ENCODE measurements at regions of chr3 and their contacts with region 1.

Region 1: GRCh38 chr3:71130471-71131374 is 452.8 kb downstream of the FOXP1 start:
- DNase-seq: peak; percentile 52 to 90 (median 77)
- ATAC-seq: peak; percentile 74
- H3K4me3 ChIP-seq: peak overlapping the region; percentile 56 to 57
- H3K4me3 Mint-ChIP-seq: peak overlapping the region; percentile 87
- H3K27ac ChIP-seq: peak overlapping the region; percentile 82 to 88
- H3K27ac Mint-ChIP-seq: peak overlapping the region; percentile 93
- H3K4me1 ChIP-seq: peaks cover 57% of the 10 kb centered on the region
- H3K4me1 Mint-ChIP-seq: peaks cover 80% of the 10 kb centered on the region
- H3K27me3 ChIP-seq: no peaks in the 10 kb centered on the region
- H3K27me3 Mint-ChIP-seq: no peaks in the 10 kb centered on the region
- CTCF ChIP-seq: no peak

Region 2: GRCh38 chr3:71064288-71064955 is 66.3 kb before region 1 on chr3:
- CTCF ChIA-PET with region 1: interaction called, 3 read pairs
- POLR2A ChIA-PET with region 1: interaction called, 4 read pairs
- intact Hi-C with region 1: loop called (anchors 1 to 2 kb)
- DNase-seq: peak; percentile 48 to 86 (median 66)
- ATAC-seq: peak; percentile 43
- H3K4me3 ChIP-seq: peak overlapping the region; percentile 65 to 91
- H3K4me3 Mint-ChIP-seq: no peak overlapping the region
- H3K27ac ChIP-seq: peak overlapping the region; percentile 80 to 85
- H3K27ac Mint-ChIP-seq: no peak overlapping the region
- H3K4me1 ChIP-seq: peaks cover 79% of the 10 kb centered on the region
- H3K4me1 Mint-ChIP-seq: peaks cover 67% of the 10 kb centered on the region
- H3K27me3 ChIP-seq: no peaks in the 10 kb centered on the region
- H3K27me3 Mint-ChIP-seq: no peaks in the 10 kb centered on the region
- CTCF ChIP-seq: no peak

Region 3: DNA sequence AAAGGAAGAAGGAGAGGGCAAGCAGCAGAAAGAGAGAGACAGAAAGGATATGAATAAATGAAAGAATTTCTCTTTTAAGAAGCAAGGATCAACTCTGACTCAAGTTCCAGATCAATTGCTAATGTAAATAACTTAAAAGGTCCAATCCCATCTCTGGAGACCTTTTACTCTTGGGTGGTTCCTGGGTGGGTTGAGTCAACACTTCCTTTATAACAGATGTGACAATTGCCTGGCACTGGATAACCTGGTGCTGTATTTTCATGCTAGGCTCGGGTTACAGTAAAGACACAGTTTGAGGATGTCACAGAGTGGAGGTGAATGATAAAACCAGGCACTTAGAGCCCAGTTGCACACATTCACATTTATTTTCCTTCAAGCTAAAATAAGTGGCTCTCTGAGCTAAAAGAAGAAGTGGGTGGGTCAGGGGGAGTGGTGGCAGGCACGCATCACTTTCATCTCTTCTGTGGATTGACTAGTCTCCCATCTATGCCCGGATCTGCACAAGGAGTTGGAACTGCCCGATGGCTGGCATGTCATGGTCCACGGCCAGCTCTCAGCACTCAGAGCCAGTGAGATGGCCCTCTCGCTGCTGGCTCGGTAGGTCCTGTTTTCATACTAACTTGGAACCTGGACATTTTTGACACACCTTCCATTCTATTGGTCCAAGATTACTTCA is 13.0 kb before region 1 on chr3:
- CTCF ChIA-PET with region 1: interaction called, 3 read pairs
- POLR2A ChIA-PET with region 1: interaction called, 3 read pairs
- intact Hi-C with region 1: loop called in 1 of 2 experiments (anchors 2 kb)
- DNase-seq: no peak
- ATAC-seq: peak; percentile 36
- H3K4me3 ChIP-seq: no peak overlapping the region
- H3K4me3 Mint-ChIP-seq: no peak overlapping the region
- H3K27ac ChIP-seq: no peak overlapping the region
- H3K27ac Mint-ChIP-seq: peak overlapping the region; percentile 86
- H3K4me1 ChIP-seq: peaks cover 56% of the 10 kb centered on the region
- H3K4me1 Mint-ChIP-seq: peaks cover 86% of the 10 kb centered on the region
- H3K27me3 ChIP-seq: no peaks in the 10 kb centered on the region
- H3K27me3 Mint-ChIP-seq: no peaks in the 10 kb centered on the region
- CTCF ChIP-seq: no peak

Region 4: GRCh38 chr3:71176366-71176765 is 45.6 kb after region 1 on chr3:
- CTCF ChIA-PET with region 1: no interaction called
- POLR2A ChIA-PET with region 1: interaction called, 3 read pairs
- intact Hi-C with region 1: loop called in 1 of 2 experiments (anchors 5 kb)
- DNase-seq: no peak
- ATAC-seq: no peak
- H3K4me3 ChIP-seq: no peak overlapping the region
- H3K4me3 Mint-ChIP-seq: no peak overlapping the region
- H3K27ac ChIP-seq: no peak overlapping the region
- H3K27ac Mint-ChIP-seq: peak overlapping the region; percentile 18
- H3K4me1 ChIP-seq: no peaks in the 10 kb centered on the region
- H3K4me1 Mint-ChIP-seq: peaks cover 36% of the 10 kb centered on the region
- H3K27me3 ChIP-seq: no peaks in the 10 kb centered on the region
- H3K27me3 Mint-ChIP-seq: no peaks in the 10 kb centered on the region
- CTCF ChIP-seq: no peak

Region 5: GRCh38 chr3:71194785-71195184 is 64.1 kb after region 1 on chr3:
- CTCF ChIA-PET with region 1: no interaction called
- POLR2A ChIA-PET with region 1: no interaction called
- intact Hi-C with region 1: no loop called
- DNase-seq: no peak
- ATAC-seq: no peak
- H3K4me3 ChIP-seq: no peak overlapping the region
- H3K4me3 Mint-ChIP-seq: no peak overlapping the region
- H3K27ac ChIP-seq: no peak overlapping the region
- H3K27ac Mint-ChIP-seq: no peak overlapping the region
- H3K4me1 ChIP-seq: peaks cover 6% of the 10 kb centered on the region
- H3K4me1 Mint-ChIP-seq: peaks cover 61% of the 10 kb centered on the region
- H3K27me3 ChIP-seq: no peaks in the 10 kb centered on the region
- H3K27me3 Mint-ChIP-seq: no peaks in the 10 kb centered on the region
- CTCF ChIP-seq: no peak

Region 6: GRCh38 chr3:71226565-71227269 is 96.0 kb after region 1 on chr3:
- CTCF ChIA-PET with region 1: no interaction called
- POLR2A ChIA-PET with region 1: no interaction called
- intact Hi-C with region 1: loop called (anchors 5 kb)
- DNase-seq: peak; percentile 57 to 88 (median 81)
- ATAC-seq: peak; percentile 75
- H3K4me3 ChIP-seq: peak overlapping the region; percentile 0 to 43
- H3K4me3 Mint-ChIP-seq: peak overlapping the region; percentile 73
- H3K27ac ChIP-seq: peak overlapping the region; percentile 18 to 63
- H3K27ac Mint-ChIP-seq: peak overlapping the region; percentile 97
- H3K4me1 ChIP-seq: peaks cover 56% of the 10 kb centered on the region
- H3K4me1 Mint-ChIP-seq: peaks cover 82% of the 10 kb centered on the region
- H3K27me3 ChIP-seq: no peaks in the 10 kb centered on the region
- H3K27me3 Mint-ChIP-seq: no peaks in the 10 kb centered on the region
- CTCF ChIP-seq: no peak